AG04449 (cell line): ENCODE measurements at regions of chr2 and their contacts with region 1.

Region 1: GRCh38 chr2:195656859-195657633 is at the start of gene SLC39A10:
- DNase-seq: peak; percentile 94
- H3K4me3 ChIP-seq: peak within 1 kb of the TSS; percentile 87
- CTCF ChIP-seq: no peak

Region 2: GRCh38 chr2:195318440-195319111 is 338.5 kb before region 1 on chr2:
- CTCF ChIA-PET with region 1: interaction called, 24 read pairs
- POLR2A ChIA-PET with region 1: interaction called, 4 read pairs
- DNase-seq: no peak
- H3K4me3 ChIP-seq: no peak overlapping the region
- CTCF ChIP-seq: peak; percentile 9

Region 3: GRCh38 chr2:195520671-195521155 is 136.3 kb before region 1 on chr2:
- CTCF ChIA-PET with region 1: interaction called, 17 read pairs
- POLR2A ChIA-PET with region 1: interaction called, 10 read pairs
- DNase-seq: peak; percentile 96
- H3K4me3 ChIP-seq: no peak overlapping the region
- CTCF ChIP-seq: no peak

Region 4: GRCh38 chr2:195561203-195562032 is 95.6 kb before region 1 on chr2:
- CTCF ChIA-PET with region 1: interaction called, 11 read pairs
- POLR2A ChIA-PET with region 1: interaction called, 14 read pairs
- DNase-seq: peak; percentile 98
- H3K4me3 ChIP-seq: no peak overlapping the region
- CTCF ChIP-seq: no peak

Region 5: GRCh38 chr2:195672668-195673067 is 15.6 kb after region 1 on chr2:
- CTCF ChIA-PET with region 1: interaction called, 21 read pairs
- POLR2A ChIA-PET with region 1: interaction called, 5 read pairs
- DNase-seq: no peak
- H3K4me3 ChIP-seq: no peak overlapping the region
- CTCF ChIP-seq: no peak

Region 6: DNA sequence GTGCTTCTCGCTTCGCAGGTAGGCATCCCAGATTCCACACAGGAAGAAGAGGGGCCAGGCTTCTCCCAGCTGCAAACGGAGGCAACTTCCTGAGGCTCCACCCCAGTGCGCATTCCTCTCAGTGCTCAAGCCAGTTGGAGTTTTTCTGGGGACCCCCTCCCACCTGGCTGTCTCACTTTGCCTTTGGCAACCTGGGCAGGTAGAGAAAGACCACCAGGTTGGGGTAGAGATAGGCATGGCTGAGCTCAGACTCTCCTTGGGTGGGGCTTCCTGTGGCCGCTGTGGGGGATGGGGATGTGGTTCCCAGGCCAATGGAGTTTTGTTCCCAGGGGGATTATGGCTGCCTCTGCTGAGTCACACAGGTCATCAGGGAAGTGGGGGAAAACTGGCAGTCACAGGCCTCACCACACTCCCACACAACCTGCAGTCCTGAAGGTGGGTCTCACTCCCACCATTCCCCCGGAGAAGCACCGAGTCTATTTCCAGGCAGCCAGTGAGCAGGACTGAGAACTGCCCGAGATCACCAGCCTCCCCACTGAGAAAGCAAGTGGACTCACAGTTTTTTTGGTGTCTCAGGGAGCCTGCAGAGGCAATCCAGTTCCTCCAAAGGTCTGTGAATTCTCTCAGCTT is 38.1 kb after region 1 on chr2:
- CTCF ChIA-PET with region 1: no interaction called
- POLR2A ChIA-PET with region 1: no interaction called
- DNase-seq: no peak
- H3K4me3 ChIP-seq: no peak overlapping the region
- CTCF ChIP-seq: no peak

Region 7: GRCh38 chr2:196068271-196069209 is 411.5 kb after region 1 on chr2 and contains the start of gene DNAH7:
- CTCF ChIA-PET with region 1: interaction called, 17 read pairs
- POLR2A ChIA-PET with region 1: interaction called, 4 read pairs
- DNase-seq: no peak
- H3K4me3 ChIP-seq: peak within 1 kb of the TSS; percentile 99
- CTCF ChIP-seq: peak; percentile 98